Heart right ventricle (tissue), 16 donors: ENCODE measurements at regions of chr11 and their contacts with region 1.

Region 1: GRCh38 chr11:2511421-2512369 is 66.9 kb downstream of the KCNQ1 start:
- DNase-seq: peak in 1 of 2 donors; percentile 50
- ATAC-seq: peak; percentile 30 to 66 (median 58)
- H3K4me3 ChIP-seq: no peak overlapping the region
- H3K27ac ChIP-seq: peak overlapping the region in 9 of 10 donors; percentile 61 to 83 (median 75)
- H3K4me1 ChIP-seq: peaks cover 12 to 73% (median 58%) of the 10 kb centered on the region in 9 donors
- H3K27me3 ChIP-seq: no peaks in the 10 kb centered on the region
- CTCF ChIP-seq: no peak

Region 2: DNA sequence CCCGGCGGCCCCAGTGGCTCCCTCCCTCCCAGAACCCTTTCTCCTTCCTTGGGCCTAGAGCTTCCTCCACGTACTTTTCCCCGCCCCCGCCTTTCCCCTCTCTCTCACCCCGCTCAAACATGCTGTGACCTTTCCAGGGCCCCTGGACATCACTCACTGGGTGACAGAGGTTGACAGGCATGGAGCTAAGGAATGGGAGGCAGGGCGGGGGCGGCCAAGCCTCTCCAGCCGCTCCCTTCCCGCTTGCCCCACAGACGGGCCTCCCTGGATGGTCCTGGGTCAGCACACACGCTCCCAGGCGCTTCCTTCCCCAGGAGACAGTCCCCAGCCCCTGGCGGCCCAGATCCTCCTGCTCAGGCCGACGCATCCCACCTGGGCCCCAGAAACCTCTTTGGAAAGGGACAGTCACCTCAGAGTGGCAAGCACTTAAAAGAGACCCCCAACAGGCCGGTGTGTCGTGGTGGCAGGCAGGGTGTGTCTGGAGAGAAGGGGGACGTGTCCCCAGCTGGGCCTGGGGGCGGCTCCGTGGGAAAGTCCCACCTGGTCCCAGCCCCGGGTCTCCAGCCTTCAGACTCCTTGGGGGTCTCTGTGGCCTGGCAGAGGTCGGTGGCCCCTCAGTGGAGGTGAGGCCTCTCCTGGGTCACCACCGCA is 522.9 kb before region 1 on chr11:
- intact Hi-C with region 1: no loop called
- DNase-seq: peak in 1 of 2 donors; percentile 21
- ATAC-seq: peak in 4 of 8 donors; percentile 13 to 50 (median 37)
- H3K4me3 ChIP-seq: no peak overlapping the region
- H3K27ac ChIP-seq: no peak overlapping the region
- H3K4me1 ChIP-seq: no peaks in the 10 kb centered on the region
- H3K27me3 ChIP-seq: no peaks in the 10 kb centered on the region
- CTCF ChIP-seq: no peak

Region 3: GRCh38 chr11:2325719-2326118 is 186.0 kb before region 1 on chr11:
- intact Hi-C with region 1: no loop called
- DNase-seq: peak in 1 of 2 donors; percentile 62
- ATAC-seq: peak; percentile 91 to 99 (median 95)
- H3K4me3 ChIP-seq: no peak overlapping the region
- H3K27ac ChIP-seq: peak overlapping the region in 9 of 10 donors; percentile 16 to 77 (median 50)
- H3K4me1 ChIP-seq: peaks cover 0 to 20% (median 0%) of the 10 kb centered on the region in 9 donors
- H3K27me3 ChIP-seq: no peaks in the 10 kb centered on the region
- CTCF ChIP-seq: no peak

Region 4: GRCh38 chr11:2444821-2445745 is 66.6 kb before region 1 on chr11 and contains the start of gene KCNQ1:
- intact Hi-C with region 1: loop called in 1 of 10 experiments (anchors 5 kb)
- DNase-seq: peak in 1 of 2 donors; percentile 68
- ATAC-seq: peak; percentile 38 to 83 (median 76)
- H3K4me3 ChIP-seq: peak within 1 kb of the TSS; percentile 32 to 60 (median 54)
- H3K27ac ChIP-seq: peak within 1 kb of the TSS in 8 of 10 donors; percentile 47 to 82 (median 58)
- H3K4me1 ChIP-seq: peaks cover 3 to 54% (median 40%) of the 10 kb centered on the region in 9 donors
- H3K27me3 ChIP-seq: peaks cover 0 to 15% (median 5%) of the 10 kb centered on the region in 7 donors
- CTCF ChIP-seq: peak in 1 of 9 donors; percentile 13
- total RNA-seq, gene KCNQ1: 28.9 to 48.2 (median 36.4) TPM

Region 5: GRCh38 chr11:2462908-2463765 is 48.6 kb before region 1 on chr11:
- intact Hi-C with region 1: loop called in 5 of 10 experiments (anchors 2 to 5 kb)
- DNase-seq: peak; percentile 79 to 81
- ATAC-seq: peak; percentile 63 to 92 (median 86)
- H3K4me3 ChIP-seq: peak overlapping the region in 3 of 10 donors; percentile 9 to 20 (median 13)
- H3K27ac ChIP-seq: peak overlapping the region; percentile 73 to 96 (median 90)
- H3K4me1 ChIP-seq: peaks cover 15 to 92% (median 54%) of the 10 kb centered on the region in 9 donors
- H3K27me3 ChIP-seq: no peaks in the 10 kb centered on the region
- CTCF ChIP-seq: no peak

Region 6: GRCh38 chr11:2474061-2474901 is 37.4 kb before region 1 on chr11:
- intact Hi-C with region 1: loop called in 3 of 10 experiments (anchors 2 to 5 kb)
- DNase-seq: no peak
- ATAC-seq: peak; percentile 36 to 91 (median 86)
- H3K4me3 ChIP-seq: no peak overlapping the region
- H3K27ac ChIP-seq: peak overlapping the region in 5 of 10 donors; percentile 39 to 81 (median 48)
- H3K4me1 ChIP-seq: peaks cover 2 to 33% (median 12%) of the 10 kb centered on the region in 9 donors
- H3K27me3 ChIP-seq: no peaks in the 10 kb centered on the region
- CTCF ChIP-seq: peak in 3 of 9 donors; percentile 18 to 28 (median 24)